IMR-90 (cell line): ENCODE measurements at regions of chr5 and their contacts with region 1.

Region 1: GRCh38 chr5:59174248-59174844 is 591.5 kb downstream of the RAB3C start:
- DNase-seq: peak; percentile 87
- ATAC-seq: peak; percentile 96
- H3K4me3 ChIP-seq: no peak overlapping the region
- H3K27ac ChIP-seq: no peak overlapping the region
- H3K4me1 ChIP-seq: no peaks in the 10 kb centered on the region
- H3K27me3 ChIP-seq: no peaks in the 10 kb centered on the region
- CTCF ChIP-seq: peak; percentile 98
- POLR2A ChIP-seq: peak; percentile 37; the same call in 1 of the 2 replicates
- RAD21 ChIP-seq: peak; percentile 97

Region 2: DNA sequence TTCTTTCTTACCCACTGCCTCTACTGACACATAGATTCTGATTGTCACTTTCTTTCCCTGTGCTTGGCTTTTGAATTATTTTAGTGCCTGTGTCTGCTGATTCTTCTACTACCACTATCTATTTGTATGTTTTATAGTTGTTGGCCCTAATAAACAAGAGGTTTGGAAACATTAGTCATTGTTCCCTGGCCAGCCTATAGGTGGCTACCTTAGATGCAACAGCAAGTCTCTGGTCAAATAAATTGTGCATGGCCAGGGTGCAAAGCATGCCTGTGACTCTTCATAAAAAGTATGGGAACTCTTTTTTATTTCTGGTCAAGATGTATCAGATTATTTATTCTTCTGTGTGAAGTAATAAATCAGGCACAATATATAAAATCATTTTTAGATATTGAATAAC is 838.8 kb before region 1 on chr5:
- CTCF ChIA-PET with region 1: no interaction called
- POLR2A ChIA-PET with region 1: no interaction called
- dilution Hi-C with region 1: no loop called
- in situ Hi-C with region 1: no loop called
- intact Hi-C with region 1: no loop called
- DNase-seq: peak; percentile 5
- ATAC-seq: no peak
- H3K4me3 ChIP-seq: no peak overlapping the region
- H3K27ac ChIP-seq: no peak overlapping the region
- H3K4me1 ChIP-seq: no peaks in the 10 kb centered on the region
- H3K27me3 ChIP-seq: no peaks in the 10 kb centered on the region
- CTCF ChIP-seq: no peak
- POLR2A ChIP-seq: no peak
- RAD21 ChIP-seq: no peak

Region 3: GRCh38 chr5:58498340-58498942 is 675.9 kb before region 1 on chr5:
- CTCF ChIA-PET with region 1: no interaction called
- POLR2A ChIA-PET with region 1: no interaction called
- dilution Hi-C with region 1: no loop called
- in situ Hi-C with region 1: loop called (anchors 25 kb)
- intact Hi-C with region 1: no loop called
- DNase-seq: peak; percentile 41
- ATAC-seq: peak; percentile 79
- H3K4me3 ChIP-seq: no peak overlapping the region
- H3K27ac ChIP-seq: no peak overlapping the region
- H3K4me1 ChIP-seq: no peaks in the 10 kb centered on the region
- H3K27me3 ChIP-seq: peaks cover 7% of the 10 kb centered on the region
- CTCF ChIP-seq: peak; percentile 69
- POLR2A ChIP-seq: no peak
- RAD21 ChIP-seq: peak; percentile 48

Region 4: DNA sequence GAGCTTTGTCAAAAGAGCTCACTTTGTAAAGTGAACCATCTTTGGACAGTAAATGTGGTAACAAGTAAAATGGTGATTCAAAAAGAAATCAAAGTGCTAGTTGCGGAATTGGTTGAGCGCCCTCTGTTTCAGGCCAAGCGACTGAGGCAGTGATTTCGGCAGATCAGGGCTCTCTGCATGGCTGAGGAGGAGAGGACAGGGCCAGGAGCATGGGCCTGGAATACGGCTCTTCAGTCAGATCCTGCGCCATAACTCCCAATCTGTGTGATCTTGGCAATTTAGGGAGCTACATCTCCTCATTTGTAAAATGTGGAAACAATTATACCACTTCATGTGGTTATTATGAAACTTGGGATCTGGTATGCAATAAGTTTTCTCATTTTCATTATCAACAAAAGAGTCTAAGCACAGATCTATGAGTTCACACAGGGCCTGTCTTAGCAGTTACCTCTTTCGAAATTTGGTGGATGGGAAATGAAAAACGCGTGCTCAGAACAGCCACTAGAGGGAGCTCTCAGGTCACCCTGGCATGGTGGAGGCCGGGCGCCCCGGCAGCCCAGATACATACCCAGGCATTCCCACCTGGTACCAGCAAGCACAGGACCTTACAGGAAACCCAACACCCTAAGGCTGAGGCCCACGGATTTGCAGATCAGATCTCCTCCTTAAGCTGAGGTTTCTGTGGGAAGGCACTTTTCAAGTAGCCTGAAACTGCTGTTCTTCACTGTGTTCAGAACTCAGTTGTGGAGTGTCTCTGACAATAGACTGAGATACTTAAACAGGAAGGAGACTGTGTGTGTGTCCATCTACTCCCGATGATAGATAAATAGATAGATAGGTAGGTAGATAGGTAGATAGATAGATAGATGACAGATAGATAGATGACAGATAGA is 287.8 kb before region 1 on chr5:
- CTCF ChIA-PET with region 1: interaction called, 9 read pairs
- POLR2A ChIA-PET with region 1: no interaction called
- dilution Hi-C with region 1: no loop called
- in situ Hi-C with region 1: loop called (anchors 5 kb)
- intact Hi-C with region 1: loop called (anchors 1 kb)
- DNase-seq: peak; percentile 57
- ATAC-seq: peak; percentile 87
- H3K4me3 ChIP-seq: no peak overlapping the region
- H3K27ac ChIP-seq: no peak overlapping the region
- H3K4me1 ChIP-seq: peaks cover 7% of the 10 kb centered on the region; the same call in 1 of the 2 replicates
- H3K27me3 ChIP-seq: peaks cover 2% of the 10 kb centered on the region
- CTCF ChIP-seq: peak; percentile 86
- POLR2A ChIP-seq: no peak
- RAD21 ChIP-seq: peak; percentile 78

Region 5: DNA sequence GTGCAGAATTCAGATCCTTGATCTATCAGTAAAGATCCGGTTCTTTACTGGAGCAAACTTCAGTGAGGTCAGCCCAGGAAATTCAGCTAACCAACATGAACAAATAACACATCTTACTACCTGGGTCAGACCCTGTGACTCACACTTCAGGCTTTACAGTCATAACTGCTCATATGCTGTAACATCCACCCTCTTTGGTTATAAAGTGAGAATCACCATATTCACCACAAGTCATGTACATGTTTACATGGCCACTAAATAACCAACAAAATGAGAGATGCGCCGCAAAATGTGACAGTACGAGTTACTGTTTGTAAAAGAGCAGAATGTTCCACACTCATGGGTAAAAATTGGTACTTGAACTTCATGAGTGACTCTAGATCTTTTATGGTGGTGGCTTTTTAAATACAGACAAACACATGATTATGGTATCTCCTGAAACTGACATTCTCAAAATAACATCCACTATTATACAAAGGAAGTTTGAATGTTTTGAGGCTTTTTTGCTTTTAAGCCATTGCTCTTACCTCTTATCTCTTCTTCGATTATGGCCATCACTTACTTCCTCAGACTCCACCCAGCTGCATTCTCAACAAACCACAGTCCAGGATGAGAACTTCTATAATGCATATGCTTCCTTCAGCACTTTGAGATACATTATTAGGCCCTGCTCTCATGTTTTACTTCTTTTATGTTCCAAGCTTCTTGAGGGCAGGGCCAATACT is 74.9 kb before region 1 on chr5:
- CTCF ChIA-PET with region 1: no interaction called
- POLR2A ChIA-PET with region 1: no interaction called
- dilution Hi-C with region 1: no loop called
- in situ Hi-C with region 1: no loop called
- intact Hi-C with region 1: loop called (anchors 5 kb)
- DNase-seq: peak; percentile 96
- ATAC-seq: peak; percentile 69
- H3K4me3 ChIP-seq: no peak overlapping the region
- H3K27ac ChIP-seq: no peak overlapping the region
- H3K4me1 ChIP-seq: peaks cover 5% of the 10 kb centered on the region; the same call in 1 of the 2 replicates
- H3K27me3 ChIP-seq: no peaks in the 10 kb centered on the region
- CTCF ChIP-seq: no peak
- POLR2A ChIP-seq: no peak; the same call in 1 of the 2 replicates
- RAD21 ChIP-seq: no peak

Region 6: DNA sequence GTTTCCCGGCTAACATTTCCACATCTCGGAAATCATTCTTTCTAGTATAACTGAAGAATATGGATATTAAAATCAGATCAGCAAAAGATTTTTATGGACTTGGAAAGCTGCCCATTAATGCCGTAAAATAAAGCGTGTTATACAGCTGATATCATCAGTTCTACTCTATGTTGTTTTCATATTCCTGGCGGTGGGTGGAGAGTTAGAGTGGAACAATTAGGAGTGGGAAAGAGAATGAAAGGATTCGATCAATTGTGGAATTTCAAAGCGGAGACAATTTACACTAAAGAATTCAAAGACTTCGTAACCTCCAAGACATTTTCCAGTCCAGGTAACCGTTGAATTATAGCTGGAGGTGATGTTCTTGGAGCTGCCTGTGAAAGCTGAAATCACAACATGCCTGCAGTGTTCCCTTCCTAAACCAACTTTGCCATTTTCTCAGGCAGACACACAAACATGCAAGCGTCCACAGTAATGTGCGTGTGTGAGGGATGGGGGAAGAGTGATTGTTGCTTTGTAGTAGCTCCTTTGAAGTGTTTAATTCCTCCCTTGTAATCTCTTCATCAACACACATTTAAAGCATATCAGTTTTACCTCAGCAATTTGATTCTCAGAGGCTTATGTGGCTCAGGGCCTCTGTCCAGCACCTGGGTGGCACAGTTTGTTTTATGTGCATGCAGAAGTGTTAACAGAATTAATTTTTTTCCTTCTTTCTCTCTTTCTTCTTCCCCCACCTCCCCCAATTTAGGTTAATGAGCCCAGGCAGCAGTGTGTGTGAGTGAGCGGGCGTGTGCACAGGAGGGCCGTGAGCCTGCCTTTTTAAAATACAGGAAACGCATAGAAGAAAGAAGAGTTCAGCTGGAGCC is 47.4 kb before region 1 on chr5:
- CTCF ChIA-PET with region 1: no interaction called
- POLR2A ChIA-PET with region 1: no interaction called
- dilution Hi-C with region 1: no loop called
- in situ Hi-C with region 1: loop called (anchors 5 kb)
- intact Hi-C with region 1: no loop called
- DNase-seq: peak; percentile 55
- ATAC-seq: peak; percentile 1
- H3K4me3 ChIP-seq: no peak overlapping the region
- H3K27ac ChIP-seq: peak overlapping the region; percentile 99
- H3K4me1 ChIP-seq: peaks cover 20% of the 10 kb centered on the region
- H3K27me3 ChIP-seq: no peaks in the 10 kb centered on the region
- CTCF ChIP-seq: no peak
- POLR2A ChIP-seq: no peak; the same call in 1 of the 2 replicates
- RAD21 ChIP-seq: no peak